ENCODE measurements at regions of chr9 and their contacts with region 1.

Region 1: GRCh38 chr9:6757456-6758247 is at the start of gene KDM4C:
- DNase-seq: peak; percentile 88 to 98 (median 94)
- ATAC-seq: peak; percentile 74
- H3K4me3 ChIP-seq: peak within 1 kb of the TSS; percentile 79 to 80
- H3K4me3 Mint-ChIP-seq: peak within 1 kb of the TSS; percentile 96
- H3K27ac ChIP-seq: peak within 1 kb of the TSS; percentile 97
- H3K27ac Mint-ChIP-seq: peak within 1 kb of the TSS; percentile 100
- H3K4me1 ChIP-seq: peaks cover 15% of the 10 kb centered on the region
- H3K4me1 Mint-ChIP-seq: peaks cover 39% of the 10 kb centered on the region
- H3K27me3 ChIP-seq: no peaks in the 10 kb centered on the region
- H3K27me3 Mint-ChIP-seq: no peaks in the 10 kb centered on the region
- CTCF ChIP-seq: no peak
- total RNA-seq, gene KDM4C: 51.6 to 54.6 TPM

Region 2: GRCh38 chr9:5843794-5844504 is 913.7 kb before region 1 on chr9:
- CTCF ChIA-PET with region 1: no interaction called
- POLR2A ChIA-PET with region 1: interaction called, 3 read pairs
- intact Hi-C with region 1: loop called in 1 of 2 experiments (anchors 5 kb)
- DNase-seq: peak in 1 of 9 experiments; percentile 35
- ATAC-seq: no peak
- H3K4me3 ChIP-seq: peak overlapping the region in 1 of 2 experiments; percentile 24
- H3K4me3 Mint-ChIP-seq: peak overlapping the region; percentile 65
- H3K27ac ChIP-seq: peak overlapping the region in 1 of 2 experiments; percentile 61
- H3K27ac Mint-ChIP-seq: peak overlapping the region; percentile 84
- H3K4me1 ChIP-seq: peaks cover 53% of the 10 kb centered on the region
- H3K4me1 Mint-ChIP-seq: peaks cover 63% of the 10 kb centered on the region
- H3K27me3 ChIP-seq: no peaks in the 10 kb centered on the region
- H3K27me3 Mint-ChIP-seq: no peaks in the 10 kb centered on the region
- CTCF ChIP-seq: no peak

Region 3: DNA sequence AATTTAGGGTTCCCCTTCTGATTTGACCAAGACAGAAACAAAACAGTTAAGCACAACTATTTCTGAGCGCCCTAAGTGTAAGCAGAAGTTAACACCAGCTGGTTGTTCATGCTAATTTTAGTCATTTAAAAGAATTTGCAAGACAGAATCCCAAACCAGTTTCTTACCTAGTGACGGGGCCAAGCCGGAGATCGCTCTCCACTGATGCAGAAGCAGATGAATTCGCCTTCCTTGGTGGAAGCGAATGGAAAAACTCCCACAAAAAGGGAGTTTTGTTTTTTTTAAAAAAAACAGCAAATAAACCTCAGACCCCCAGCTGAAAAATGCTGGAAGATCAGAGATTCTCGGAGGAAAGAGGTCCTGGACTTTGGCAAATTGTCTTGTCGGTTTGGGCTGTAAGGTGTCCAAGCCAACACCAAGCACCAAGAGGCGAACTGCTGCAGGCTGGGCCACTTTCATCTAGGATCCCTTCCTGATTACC is 64.7 kb before region 1 on chr9:
- CTCF ChIA-PET with region 1: no interaction called
- POLR2A ChIA-PET with region 1: no interaction called
- intact Hi-C with region 1: no loop called
- DNase-seq: no peak
- ATAC-seq: no peak
- H3K4me3 ChIP-seq: no peak overlapping the region
- H3K4me3 Mint-ChIP-seq: no peak overlapping the region
- H3K27ac ChIP-seq: no peak overlapping the region
- H3K27ac Mint-ChIP-seq: no peak overlapping the region
- H3K4me1 ChIP-seq: no peaks in the 10 kb centered on the region
- H3K4me1 Mint-ChIP-seq: no peaks in the 10 kb centered on the region
- H3K27me3 ChIP-seq: no peaks in the 10 kb centered on the region
- H3K27me3 Mint-ChIP-seq: no peaks in the 10 kb centered on the region
- CTCF ChIP-seq: no peak

Region 4: DNA sequence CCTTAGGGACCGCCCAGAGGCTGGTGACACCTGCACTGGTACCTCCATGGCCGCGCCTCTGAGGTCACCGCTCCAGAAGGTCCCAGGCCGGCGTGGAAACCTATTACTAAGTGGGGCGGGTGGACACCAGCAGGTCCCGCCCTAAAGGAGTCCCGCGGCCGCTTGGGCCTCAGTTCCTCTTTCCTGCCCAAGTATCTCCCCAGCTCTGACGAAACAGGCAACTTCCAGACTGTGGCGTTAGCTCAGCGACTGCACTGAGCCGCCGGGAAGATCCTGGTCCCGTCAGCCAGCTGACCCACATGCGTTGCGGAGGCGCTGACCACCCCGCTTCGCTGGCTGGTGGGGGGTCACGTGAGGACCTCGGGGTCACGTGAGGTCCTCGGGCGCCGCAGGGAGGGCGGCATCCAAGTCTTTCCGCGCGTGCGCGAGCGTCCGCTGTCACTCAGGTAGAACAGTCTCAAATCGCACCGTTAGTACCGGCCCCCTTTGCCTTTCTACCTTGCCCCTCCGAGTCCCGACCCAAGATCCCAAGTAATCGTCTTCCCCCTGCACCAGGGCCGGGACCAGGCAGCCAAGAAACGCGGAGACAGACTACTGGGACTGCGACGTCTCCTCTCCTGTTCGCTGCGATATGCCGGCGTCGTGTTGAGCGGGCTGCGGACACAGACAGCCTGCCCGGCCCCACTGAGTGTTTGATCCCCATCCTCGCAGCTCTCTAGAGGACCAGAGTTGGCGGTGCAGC is 53.6 kb before region 1 on chr9:
- CTCF ChIA-PET with region 1: interaction called, 3 read pairs
- POLR2A ChIA-PET with region 1: interaction called, 62 read pairs
- intact Hi-C with region 1: loop called (anchors 1 kb)
- DNase-seq: peak; percentile 61 to 94 (median 86)
- ATAC-seq: peak; percentile 82
- H3K4me3 ChIP-seq: peak overlapping the region; percentile 80 to 99
- H3K4me3 Mint-ChIP-seq: peak overlapping the region; percentile 100
- H3K27ac ChIP-seq: peak overlapping the region; percentile 94 to 96
- H3K27ac Mint-ChIP-seq: peak overlapping the region; percentile 100
- H3K4me1 ChIP-seq: peaks cover 10% of the 10 kb centered on the region
- H3K4me1 Mint-ChIP-seq: peaks cover 13% of the 10 kb centered on the region
- H3K27me3 ChIP-seq: no peaks in the 10 kb centered on the region
- H3K27me3 Mint-ChIP-seq: no peaks in the 10 kb centered on the region
- CTCF ChIP-seq: no peak

Region 5: GRCh38 chr9:6715755-6716643 is 41.7 kb before region 1 on chr9:
- CTCF ChIA-PET with region 1: interaction called, 3 read pairs
- POLR2A ChIA-PET with region 1: interaction called, 58 read pairs
- intact Hi-C with region 1: loop called (anchors 1 to 5 kb)
- DNase-seq: peak; percentile 41 to 86 (median 69)
- ATAC-seq: peak; percentile 85
- H3K4me3 ChIP-seq: peak overlapping the region; percentile 44 to 71
- H3K4me3 Mint-ChIP-seq: peak overlapping the region; percentile 88
- H3K27ac ChIP-seq: peak overlapping the region; percentile 25 to 72
- H3K27ac Mint-ChIP-seq: peak overlapping the region; percentile 88
- H3K4me1 ChIP-seq: no peaks in the 10 kb centered on the region
- H3K4me1 Mint-ChIP-seq: peaks cover 11% of the 10 kb centered on the region
- H3K27me3 ChIP-seq: no peaks in the 10 kb centered on the region
- H3K27me3 Mint-ChIP-seq: no peaks in the 10 kb centered on the region
- CTCF ChIP-seq: no peak

Region 6: GRCh38 chr9:6818320-6818922 is 60.8 kb after region 1 on chr9:
- CTCF ChIA-PET with region 1: no interaction called
- POLR2A ChIA-PET with region 1: interaction called, 4 read pairs
- intact Hi-C with region 1: loop called in 1 of 2 experiments (anchors 5 kb)
- DNase-seq: no peak
- ATAC-seq: no peak
- H3K4me3 ChIP-seq: no peak overlapping the region
- H3K4me3 Mint-ChIP-seq: no peak overlapping the region
- H3K27ac ChIP-seq: no peak overlapping the region
- H3K27ac Mint-ChIP-seq: peak overlapping the region; percentile 4
- H3K4me1 ChIP-seq: no peaks in the 10 kb centered on the region
- H3K4me1 Mint-ChIP-seq: peaks cover 29% of the 10 kb centered on the region
- H3K27me3 ChIP-seq: no peaks in the 10 kb centered on the region
- H3K27me3 Mint-ChIP-seq: no peaks in the 10 kb centered on the region
- CTCF ChIP-seq: no peak